GM10248 (cell line): ENCODE measurements at regions of chr16 and their contacts with region 1.

Region 1: DNA sequence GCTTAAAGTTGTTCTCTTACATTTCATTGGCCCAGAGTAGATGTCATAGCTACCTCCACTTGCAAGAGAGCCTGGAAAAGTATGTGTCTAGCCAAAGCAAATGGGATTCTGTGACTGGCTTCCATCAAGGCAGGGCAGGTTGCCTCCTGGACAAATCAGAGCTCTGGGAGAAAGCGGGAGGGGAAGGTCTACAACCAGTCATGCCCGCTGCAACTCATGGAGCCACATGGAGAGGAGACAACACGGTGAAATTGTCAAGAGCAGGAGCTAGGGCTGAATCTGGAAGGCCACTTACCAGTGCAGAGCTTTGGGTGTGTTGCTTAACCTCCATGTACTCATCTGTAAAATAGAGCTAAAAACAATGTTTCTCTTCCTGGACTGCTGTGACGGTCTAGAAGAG is 83.8 kb downstream of the MARF1 start:
- DNase-seq: no peak
- CTCF ChIP-seq: no peak

Region 2: DNA sequence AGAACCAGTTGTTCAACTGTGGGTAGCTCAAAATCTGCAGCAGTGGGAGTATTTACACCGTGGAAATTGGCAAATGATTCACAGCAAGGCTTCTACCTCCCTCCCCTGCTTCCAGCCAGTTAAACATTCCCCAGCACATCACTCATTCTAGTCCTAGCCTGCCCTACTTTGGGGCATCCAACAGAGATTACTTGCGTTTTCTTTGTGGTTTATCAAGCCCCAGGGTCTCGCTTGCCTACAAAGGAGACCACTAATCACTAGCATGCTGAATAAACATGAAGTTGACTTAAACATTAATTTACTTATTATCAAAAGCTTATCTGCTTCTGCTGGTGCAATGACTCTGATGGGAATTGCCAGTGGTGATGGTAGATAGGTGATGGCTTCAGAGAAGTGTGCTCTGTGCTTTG is 10.7 kb before region 1 on chr16:
- CTCF ChIA-PET with region 1: interaction called, 11 read pairs
- POLR2A ChIA-PET with region 1: no interaction called
- DNase-seq: no peak
- CTCF ChIP-seq: no peak